ENCODE measurements at regions of chr3 and their contacts with region 1.

Region 1: GRCh38 chr3:152268555-152269425 is at the start of gene MBNL1:
- DNase-seq: peak; percentile 88 to 92 (median 88)
- ATAC-seq: peak; percentile 81
- H3K4me3 ChIP-seq: peak within 1 kb of the TSS; percentile 91
- H3K4me1 ChIP-seq: peaks cover 42% of the 10 kb centered on the region
- CTCF ChIP-seq: no peak
- total RNA-seq, gene MBNL1: 184 to 381 (median 215) TPM

Region 2: DNA sequence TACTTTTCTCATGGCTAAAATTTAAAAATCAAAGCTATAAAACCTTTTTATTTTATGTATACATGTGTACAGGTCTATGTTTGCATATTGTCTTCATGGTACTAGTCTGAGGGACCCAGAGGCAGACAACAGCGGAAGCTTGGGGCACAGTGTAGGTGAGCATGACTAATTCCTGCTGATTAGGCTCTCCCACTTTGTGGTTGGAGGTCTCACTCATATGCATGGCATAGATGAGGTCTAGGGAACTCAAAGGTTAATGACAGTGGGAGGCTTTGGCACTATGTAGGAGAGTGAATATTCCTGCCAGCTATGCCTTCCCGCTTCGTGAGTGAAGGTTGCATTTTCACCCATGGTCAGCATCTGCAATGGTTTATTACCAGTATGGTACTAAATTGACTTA is 582.5 kb before region 1 on chr3:
- intact Hi-C with region 1: no loop called
- DNase-seq: no peak
- ATAC-seq: no peak
- H3K4me3 ChIP-seq: no peak overlapping the region
- H3K4me1 ChIP-seq: no peaks in the 10 kb centered on the region
- CTCF ChIP-seq: no peak

Region 3: DNA sequence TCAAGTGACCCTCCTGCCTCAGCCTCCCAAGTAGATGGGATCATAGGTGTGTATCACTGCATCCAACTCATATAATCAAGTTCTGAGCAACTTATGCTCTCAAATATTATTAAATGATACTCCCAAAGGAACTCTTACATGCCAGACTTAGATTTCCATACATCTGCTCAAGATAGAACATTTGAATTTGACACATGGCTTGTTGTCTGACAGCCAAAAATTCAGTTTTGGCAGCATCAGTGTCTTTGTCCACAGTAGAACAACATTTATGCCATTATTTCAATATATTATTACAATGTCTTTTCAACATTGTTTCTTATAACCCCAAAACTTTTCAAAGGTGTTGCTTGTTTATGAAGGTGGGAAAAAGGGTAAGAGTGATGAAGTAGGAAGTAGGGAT is 279.2 kb before region 1 on chr3:
- intact Hi-C with region 1: no loop called
- DNase-seq: no peak
- ATAC-seq: no peak
- H3K4me3 ChIP-seq: no peak overlapping the region
- H3K4me1 ChIP-seq: peaks cover 25% of the 10 kb centered on the region
- CTCF ChIP-seq: no peak

Region 4: DNA sequence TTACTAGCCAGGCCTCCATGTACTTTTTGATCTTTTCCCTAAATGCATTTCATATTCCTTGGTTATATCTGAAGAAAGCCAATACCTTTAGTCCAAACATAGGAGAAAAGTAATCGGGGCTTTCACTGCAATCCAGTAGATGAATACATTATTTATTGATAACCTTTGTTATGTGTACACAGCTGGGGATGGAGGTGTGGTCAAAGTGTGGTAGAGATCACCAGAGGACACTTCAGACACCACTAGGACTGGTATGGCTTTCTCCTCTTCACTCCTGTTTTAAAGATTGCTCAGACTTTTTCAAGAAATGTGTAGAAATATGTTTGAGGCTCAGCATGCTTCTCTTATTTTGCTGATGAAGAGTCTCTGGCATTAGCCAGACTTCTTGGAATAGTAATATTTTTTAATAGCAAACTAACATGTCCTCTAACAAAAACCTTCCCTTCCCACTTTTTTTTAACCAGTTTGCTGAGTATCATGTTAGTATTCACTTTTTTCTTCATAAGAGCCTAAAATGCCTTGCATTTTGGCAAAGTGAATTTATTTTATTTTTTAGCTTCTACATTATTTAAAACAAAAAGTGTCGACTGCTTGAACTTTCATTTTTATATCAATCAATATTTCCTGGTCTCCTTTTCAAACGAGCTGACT is 65.7 kb before region 1 on chr3:
- intact Hi-C with region 1: loop called in 1 of 2 experiments (anchors 5 kb)
- DNase-seq: peak in 1 of 3 donors; percentile 68
- ATAC-seq: peak; percentile 77
- H3K4me3 ChIP-seq: no peak overlapping the region
- H3K4me1 ChIP-seq: no peaks in the 10 kb centered on the region
- CTCF ChIP-seq: no peak

Measured in mucosa of descending colon (tissue), 3 donors.